Activated CD4-positive, alpha-beta memory T cell treated with anti-CD3 and anti-CD28 coated beads for 36 hours (primary cell): ENCODE measurements at regions of chr2 and their contacts with region 1.

Region 1: GRCh38 chr2:32135409-32135808 is 30.3 kb upstream of the SLC30A6 start:
- DNase-seq: no peak
- H3K4me3 Mint-ChIP-seq: no peak overlapping the region
- H3K27ac Mint-ChIP-seq: no peak overlapping the region
- H3K4me1 Mint-ChIP-seq: no peaks in the 10 kb centered on the region
- H3K27me3 Mint-ChIP-seq: no peaks in the 10 kb centered on the region

Region 2: GRCh38 chr2:31688282-31688681 is 447.1 kb before region 1 on chr2:
- CTCF ChIA-PET with region 1: no interaction called
- POLR2A ChIA-PET with region 1: no interaction called
- intact Hi-C with region 1: loop called (anchors 10 kb)
- DNase-seq: no peak
- H3K4me3 Mint-ChIP-seq: no peak overlapping the region
- H3K27ac Mint-ChIP-seq: no peak overlapping the region
- H3K4me1 Mint-ChIP-seq: no peaks in the 10 kb centered on the region
- H3K27me3 Mint-ChIP-seq: peaks cover 3% of the 10 kb centered on the region

Region 3: GRCh38 chr2:32161296-32161695 is 25.9 kb after region 1 on chr2:
- CTCF ChIA-PET with region 1: no interaction called
- POLR2A ChIA-PET with region 1: no interaction called
- intact Hi-C with region 1: no loop called
- DNase-seq: no peak
- H3K4me3 Mint-ChIP-seq: no peak overlapping the region
- H3K27ac Mint-ChIP-seq: no peak overlapping the region
- H3K4me1 Mint-ChIP-seq: peaks cover 11% of the 10 kb centered on the region
- H3K27me3 Mint-ChIP-seq: no peaks in the 10 kb centered on the region